Right cardiac atrium (tissue), 5 donors: ENCODE measurements at regions of chr1 and their contacts with region 1.

Region 1: GRCh38 chr1:150944856-150945255 is 18.7 kb downstream of the SETDB1 start:
- DNase-seq: no peak
- ATAC-seq: no peak
- H3K4me3 ChIP-seq: no peak overlapping the region
- H3K27ac ChIP-seq: no peak overlapping the region
- H3K4me1 ChIP-seq: no peaks in the 10 kb centered on the region
- H3K27me3 ChIP-seq: no peaks in the 10 kb centered on the region

Region 2: GRCh38 chr1:150963321-150964163 is 18.7 kb after region 1 on chr1:
- intact Hi-C with region 1: loop called in 1 of 4 experiments (anchors 2 kb)
- DNase-seq: no peak
- ATAC-seq: no peak
- H3K4me3 ChIP-seq: no peak overlapping the region
- H3K27ac ChIP-seq: no peak overlapping the region
- H3K4me1 ChIP-seq: no peaks in the 10 kb centered on the region
- H3K27me3 ChIP-seq: no peaks in the 10 kb centered on the region

Region 3: GRCh38 chr1:150979092-150980056 is 34.5 kb after region 1 on chr1:
- intact Hi-C with region 1: no loop called
- DNase-seq: peak; percentile 87 to 94 (median 91)
- ATAC-seq: peak; percentile 45 to 61
- H3K4me3 ChIP-seq: no peak overlapping the region
- H3K27ac ChIP-seq: peak overlapping the region; percentile 15
- H3K4me1 ChIP-seq: peaks cover 3% of the 10 kb centered on the region
- H3K27me3 ChIP-seq: no peaks in the 10 kb centered on the region